ENCODE measurements at regions of chr2 and their contacts with region 1.

Region 1: GRCh38 chr2:187358531-187358930 is 89.5 kb downstream of the CALCRL start:
- DNase-seq: no peak
- ATAC-seq: no peak
- H3K4me3 ChIP-seq: no peak overlapping the region
- H3K4me3 Mint-ChIP-seq: no peak overlapping the region
- H3K27ac ChIP-seq: no peak overlapping the region
- H3K27ac Mint-ChIP-seq: no peak overlapping the region
- H3K4me1 ChIP-seq: no peaks in the 10 kb centered on the region
- H3K4me1 Mint-ChIP-seq: peaks cover 0 to 2% (median 0%) of the 10 kb centered on the region in 7 donors
- H3K27me3 ChIP-seq: no peaks in the 10 kb centered on the region
- H3K27me3 Mint-ChIP-seq: no peaks in the 10 kb centered on the region

Region 2: GRCh38 chr2:185507719-185508118 is 1850.8 kb before region 1 on chr2:
- CTCF ChIA-PET with region 1: no interaction called
- POLR2A ChIA-PET with region 1: no interaction called
- intact Hi-C with region 1: loop called in 1 of 2 experiments (anchors 5 kb)
- DNase-seq: no peak
- ATAC-seq: no peak
- H3K4me3 ChIP-seq: no peak overlapping the region
- H3K4me3 Mint-ChIP-seq: no peak overlapping the region
- H3K27ac ChIP-seq: no peak overlapping the region
- H3K27ac Mint-ChIP-seq: no peak overlapping the region
- H3K4me1 ChIP-seq: no peaks in the 10 kb centered on the region
- H3K4me1 Mint-ChIP-seq: no peaks in the 10 kb centered on the region
- H3K27me3 ChIP-seq: no peaks in the 10 kb centered on the region
- H3K27me3 Mint-ChIP-seq: no peaks in the 10 kb centered on the region

Region 3: GRCh38 chr2:187093771-187094412 is 264.6 kb before region 1 on chr2:
- CTCF ChIA-PET with region 1: no interaction called
- POLR2A ChIA-PET with region 1: no interaction called
- intact Hi-C with region 1: no loop called
- DNase-seq: no peak
- ATAC-seq: no peak
- H3K4me3 ChIP-seq: no peak overlapping the region
- H3K4me3 Mint-ChIP-seq: no peak overlapping the region
- H3K27ac ChIP-seq: no peak overlapping the region
- H3K27ac Mint-ChIP-seq: no peak overlapping the region
- H3K4me1 ChIP-seq: no peaks in the 10 kb centered on the region
- H3K4me1 Mint-ChIP-seq: peaks cover 0 to 2% (median 0%) of the 10 kb centered on the region in 7 donors
- H3K27me3 ChIP-seq: no peaks in the 10 kb centered on the region
- H3K27me3 Mint-ChIP-seq: no peaks in the 10 kb centered on the region

Region 4: DNA sequence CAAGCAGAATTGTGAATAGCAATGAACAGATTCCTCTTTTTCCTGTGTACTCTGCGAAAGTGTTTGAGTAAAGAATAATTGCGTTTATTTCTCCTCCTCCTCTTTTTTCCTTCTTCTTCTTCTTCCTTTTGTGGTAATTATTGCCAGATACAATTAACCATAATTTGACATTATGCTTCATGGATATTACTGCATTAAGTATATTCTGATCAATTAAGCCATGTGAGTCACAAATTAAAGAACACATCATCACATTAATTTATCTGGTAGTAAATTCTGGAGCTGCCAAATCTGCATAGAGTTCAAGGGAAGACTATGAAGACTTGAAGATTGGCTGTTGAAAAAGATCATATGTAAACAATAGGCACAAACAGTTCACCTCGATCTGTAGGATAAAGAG is 268.6 kb after region 1 on chr2:
- CTCF ChIA-PET with region 1: no interaction called
- POLR2A ChIA-PET with region 1: no interaction called
- intact Hi-C with region 1: no loop called
- DNase-seq: no peak
- ATAC-seq: no peak
- H3K4me3 ChIP-seq: no peak overlapping the region
- H3K4me3 Mint-ChIP-seq: no peak overlapping the region
- H3K27ac ChIP-seq: no peak overlapping the region
- H3K27ac Mint-ChIP-seq: no peak overlapping the region
- H3K4me1 ChIP-seq: no peaks in the 10 kb centered on the region
- H3K4me1 Mint-ChIP-seq: no peaks in the 10 kb centered on the region
- H3K27me3 ChIP-seq: no peaks in the 10 kb centered on the region
- H3K27me3 Mint-ChIP-seq: no peaks in the 10 kb centered on the region